ENCODE measurements at regions of chr5 and their contacts with region 1.

Region 1: DNA sequence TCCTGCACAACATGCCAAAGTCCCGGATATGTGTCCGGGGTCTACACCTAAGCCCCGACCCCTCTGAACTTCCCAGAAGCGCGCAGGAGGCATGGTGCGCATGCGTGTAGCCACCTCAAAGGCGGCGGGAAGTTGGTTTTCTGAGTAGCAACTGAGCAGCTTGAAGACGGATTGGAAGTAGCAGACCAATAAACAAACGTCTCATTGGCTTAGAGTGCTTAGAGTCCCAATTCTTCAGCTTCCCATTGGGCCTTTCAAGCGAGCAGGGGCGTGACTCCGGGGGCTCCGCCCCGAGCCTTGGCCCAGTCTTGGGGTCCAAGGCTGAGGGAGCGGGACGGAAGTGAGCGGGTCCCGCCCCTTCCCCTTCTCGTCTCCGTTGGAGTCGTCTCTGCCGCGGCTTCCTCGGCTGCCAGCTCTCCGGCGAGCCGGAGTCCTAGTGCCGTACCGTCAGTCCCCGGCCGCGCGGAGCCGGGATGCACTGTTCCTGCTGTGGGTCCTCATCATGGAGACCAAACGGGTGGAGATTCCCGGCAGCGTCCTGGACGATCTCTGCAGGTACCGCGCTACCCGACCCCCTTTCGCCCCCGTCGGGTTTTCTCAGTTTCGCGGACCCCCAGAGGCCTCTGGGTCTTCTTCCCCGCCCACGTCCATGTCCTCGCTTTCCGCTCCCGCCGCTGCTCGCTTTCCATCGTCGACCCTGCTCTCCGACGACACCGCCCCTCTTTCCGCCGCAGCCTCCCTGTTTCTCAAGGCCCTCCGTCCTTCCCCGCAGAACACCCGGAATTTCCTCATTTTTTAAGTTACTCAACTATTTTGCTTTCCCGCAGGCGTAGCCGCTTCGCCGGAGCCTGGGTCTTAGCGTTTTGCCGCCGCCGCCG is at the start of gene DCP2:
- DNase-seq: peak; percentile 84 to 98 (median 97)
- ATAC-seq: peak; percentile 98
- H3K4me3 ChIP-seq: peak within 1 kb of the TSS; percentile 75
- H3K4me3 Mint-ChIP-seq: peak within 1 kb of the TSS; percentile 88 to 99 (median 98)
- H3K27ac ChIP-seq: peak within 1 kb of the TSS; percentile 83
- H3K27ac Mint-ChIP-seq: peak within 1 kb of the TSS; percentile 89 to 98 (median 95)
- H3K4me1 ChIP-seq: peaks cover 7 to 21% of the 10 kb centered on the region in 2 donors
- H3K4me1 Mint-ChIP-seq: peaks cover 35 to 54% (median 51%) of the 10 kb centered on the region in 7 donors
- H3K27me3 ChIP-seq: no peaks in the 10 kb centered on the region
- H3K27me3 Mint-ChIP-seq: no peaks in the 10 kb centered on the region
- total RNA-seq, gene DCP2: 60.2 to 101 (median 85.1) TPM

Region 2: DNA sequence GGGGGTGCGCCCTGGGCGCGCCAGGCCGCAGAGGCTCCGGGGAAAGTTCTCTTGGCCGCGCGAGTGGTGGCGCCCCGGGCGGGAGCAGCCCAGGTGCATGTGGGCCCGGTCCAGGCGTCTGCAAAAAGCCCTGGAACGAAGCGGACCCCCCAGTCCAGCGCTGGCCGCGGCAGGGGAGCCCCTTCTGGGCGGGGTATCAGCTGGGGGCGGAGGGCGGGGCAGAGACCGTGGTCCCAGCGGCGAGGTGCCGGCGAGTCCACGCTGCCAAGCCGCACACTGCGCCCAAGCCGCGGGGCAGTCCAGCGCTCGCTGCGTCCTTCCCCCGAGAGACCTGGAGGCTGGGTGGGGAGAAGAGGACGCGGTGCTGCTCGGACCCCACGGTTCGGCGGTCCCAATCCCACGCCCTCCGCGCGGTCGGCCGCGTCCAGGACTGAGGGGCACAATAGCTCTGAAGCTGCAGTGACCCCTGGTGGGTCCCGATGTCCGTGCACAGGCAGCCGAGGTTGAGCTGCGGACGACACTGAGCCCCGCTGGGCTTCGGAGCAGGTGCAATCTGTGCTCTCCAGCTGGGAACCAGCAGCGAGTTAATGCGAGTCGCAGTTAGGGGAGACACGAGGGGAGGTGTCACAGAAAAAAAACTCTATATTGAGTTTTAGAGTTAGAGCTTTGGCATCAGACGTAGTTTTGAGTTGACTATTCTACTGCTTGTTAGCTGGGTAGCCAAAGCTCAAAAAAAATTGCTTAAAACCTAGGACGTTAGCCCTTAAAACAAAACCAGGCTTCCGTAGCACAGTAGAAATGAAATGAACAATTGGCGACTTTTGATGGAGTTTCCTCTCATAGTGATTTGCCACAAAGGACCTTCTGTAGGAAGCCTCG is 556.4 kb before region 1 on chr5:
- CTCF ChIA-PET with region 1: no interaction called
- POLR2A ChIA-PET with region 1: no interaction called
- intact Hi-C with region 1: loop called in 1 of 2 experiments (anchors 5 kb)
- DNase-seq: peak in 1 of 9 donors; percentile 39
- ATAC-seq: peak; percentile 76
- H3K4me3 ChIP-seq: no peak overlapping the region
- H3K4me3 Mint-ChIP-seq: peak overlapping the region in 7 of 10 donors; percentile 37 to 81 (median 56)
- H3K27ac ChIP-seq: no peak overlapping the region
- H3K27ac Mint-ChIP-seq: no peak overlapping the region
- H3K4me1 ChIP-seq: no peaks in the 10 kb centered on the region
- H3K4me1 Mint-ChIP-seq: peaks cover 0 to 17% (median 13%) of the 10 kb centered on the region in 7 donors
- H3K27me3 ChIP-seq: peaks cover 3 to 9% of the 10 kb centered on the region in 2 donors
- H3K27me3 Mint-ChIP-seq: peaks cover 48 to 67% (median 61%) of the 10 kb centered on the region in 5 donors

Region 3: GRCh38 chr5:112811023-112811422 is 165.6 kb before region 1 on chr5:
- CTCF ChIA-PET with region 1: no interaction called
- POLR2A ChIA-PET with region 1: no interaction called
- intact Hi-C with region 1: no loop called
- DNase-seq: no peak
- ATAC-seq: no peak
- H3K4me3 ChIP-seq: no peak overlapping the region
- H3K4me3 Mint-ChIP-seq: no peak overlapping the region
- H3K27ac ChIP-seq: no peak overlapping the region
- H3K27ac Mint-ChIP-seq: peak overlapping the region in 2 of 9 donors; percentile 15 to 19
- H3K4me1 ChIP-seq: no peaks in the 10 kb centered on the region
- H3K4me1 Mint-ChIP-seq: peaks cover 0 to 5% (median 0%) of the 10 kb centered on the region in 7 donors
- H3K27me3 ChIP-seq: no peaks in the 10 kb centered on the region
- H3K27me3 Mint-ChIP-seq: no peaks in the 10 kb centered on the region

Region 4: GRCh38 chr5:112960315-112960714 is 16.4 kb before region 1 on chr5:
- CTCF ChIA-PET with region 1: interaction called, 5 read pairs
- POLR2A ChIA-PET with region 1: interaction called, 10 read pairs
- intact Hi-C with region 1: loop called in 1 of 2 experiments (anchors 1 kb)
- DNase-seq: no peak
- ATAC-seq: no peak
- H3K4me3 ChIP-seq: no peak overlapping the region
- H3K4me3 Mint-ChIP-seq: no peak overlapping the region
- H3K27ac ChIP-seq: no peak overlapping the region
- H3K27ac Mint-ChIP-seq: peak overlapping the region in 1 of 9 donors; percentile 13
- H3K4me1 ChIP-seq: no peaks in the 10 kb centered on the region
- H3K4me1 Mint-ChIP-seq: peaks cover 6 to 44% (median 17%) of the 10 kb centered on the region in 7 donors
- H3K27me3 ChIP-seq: no peaks in the 10 kb centered on the region
- H3K27me3 Mint-ChIP-seq: peaks cover 0 to 7% (median 0%) of the 10 kb centered on the region in 5 donors

Region 5: GRCh38 chr5:113294311-113295110 is 317.8 kb after region 1 on chr5:
- CTCF ChIA-PET with region 1: no interaction called
- POLR2A ChIA-PET with region 1: interaction called, 3 read pairs
- intact Hi-C with region 1: loop called in 1 of 2 experiments (anchors 1 kb)
- DNase-seq: peak; percentile 30 to 72 (median 62)
- ATAC-seq: peak; percentile 92
- H3K4me3 ChIP-seq: peak overlapping the region; percentile 64
- H3K4me3 Mint-ChIP-seq: peak overlapping the region; percentile 88 to 96 (median 92)
- H3K27ac ChIP-seq: peak overlapping the region; percentile 43
- H3K27ac Mint-ChIP-seq: peak overlapping the region in 6 of 9 donors; percentile 21 to 86 (median 46)
- H3K4me1 ChIP-seq: peaks cover 8 to 11% of the 10 kb centered on the region in 2 donors
- H3K4me1 Mint-ChIP-seq: peaks cover 13 to 28% (median 21%) of the 10 kb centered on the region in 7 donors
- H3K27me3 ChIP-seq: no peaks in the 10 kb centered on the region
- H3K27me3 Mint-ChIP-seq: peaks cover 30 to 82% (median 59%) of the 10 kb centered on the region in 5 donors

Measured in naive thymus-derived CD4-positive, alpha-beta T cell (primary cell).